CD8-positive, alpha-beta T cell (primary cell): ENCODE measurements at regions of chr18 and their contacts with region 1.

Region 1: GRCh38 chr18:24014062-24014985 is at the start of gene TTC39C:
- DNase-seq: peak; percentile 55 to 90 (median 83)
- ATAC-seq: peak; percentile 68
- H3K4me3 ChIP-seq: peak within 1 kb of the TSS; percentile 72 to 90
- H3K4me3 Mint-ChIP-seq: peak within 1 kb of the TSS; percentile 92
- H3K27ac ChIP-seq: peak within 1 kb of the TSS; percentile 58 to 80
- H3K27ac Mint-ChIP-seq: peak within 1 kb of the TSS; percentile 90
- H3K4me1 ChIP-seq: peaks cover 78% of the 10 kb centered on the region
- H3K4me1 Mint-ChIP-seq: peaks cover 78% of the 10 kb centered on the region
- H3K27me3 ChIP-seq: no peaks in the 10 kb centered on the region
- H3K27me3 Mint-ChIP-seq: no peaks in the 10 kb centered on the region
- CTCF ChIP-seq: no peak
- total RNA-seq, gene TTC39C: 84.7 to 85.7 TPM

Region 2: GRCh38 chr18:23586249-23587196 is 427.8 kb before region 1 on chr18 and contains the start of gene NPC1:
- CTCF ChIA-PET with region 1: no interaction called
- POLR2A ChIA-PET with region 1: no interaction called
- intact Hi-C with region 1: loop called in 1 of 2 experiments (anchors 10 kb)
- DNase-seq: peak; percentile 84 to 96 (median 91)
- ATAC-seq: peak; percentile 88
- H3K4me3 ChIP-seq: peak within 1 kb of the TSS; percentile 99 to 100
- H3K4me3 Mint-ChIP-seq: peak within 1 kb of the TSS; percentile 95
- H3K27ac ChIP-seq: peak within 1 kb of the TSS; percentile 99 to 100
- H3K27ac Mint-ChIP-seq: peak within 1 kb of the TSS; percentile 97
- H3K4me1 ChIP-seq: peaks cover 24% of the 10 kb centered on the region
- H3K4me1 Mint-ChIP-seq: peaks cover 41% of the 10 kb centered on the region
- H3K27me3 ChIP-seq: no peaks in the 10 kb centered on the region
- H3K27me3 Mint-ChIP-seq: no peaks in the 10 kb centered on the region
- CTCF ChIP-seq: peak; percentile 99
- total RNA-seq, gene NPC1: 37.3 to 38.9 TPM

Region 3: GRCh38 chr18:23828426-23828825 is 185.9 kb before region 1 on chr18:
- CTCF ChIA-PET with region 1: no interaction called
- POLR2A ChIA-PET with region 1: no interaction called
- intact Hi-C with region 1: loop called in 1 of 2 experiments (anchors 5 kb)
- DNase-seq: peak in 8 of 9 experiments; percentile 25 to 91 (median 52)
- ATAC-seq: peak; percentile 98
- H3K4me3 ChIP-seq: no peak overlapping the region
- H3K4me3 Mint-ChIP-seq: no peak overlapping the region
- H3K27ac ChIP-seq: peak overlapping the region; percentile 32 to 73
- H3K27ac Mint-ChIP-seq: peak overlapping the region; percentile 56
- H3K4me1 ChIP-seq: peaks cover 12% of the 10 kb centered on the region
- H3K4me1 Mint-ChIP-seq: peaks cover 17% of the 10 kb centered on the region
- H3K27me3 ChIP-seq: no peaks in the 10 kb centered on the region
- H3K27me3 Mint-ChIP-seq: peaks cover under 1% of the 10 kb centered on the region
- CTCF ChIP-seq: no peak

Region 4: DNA sequence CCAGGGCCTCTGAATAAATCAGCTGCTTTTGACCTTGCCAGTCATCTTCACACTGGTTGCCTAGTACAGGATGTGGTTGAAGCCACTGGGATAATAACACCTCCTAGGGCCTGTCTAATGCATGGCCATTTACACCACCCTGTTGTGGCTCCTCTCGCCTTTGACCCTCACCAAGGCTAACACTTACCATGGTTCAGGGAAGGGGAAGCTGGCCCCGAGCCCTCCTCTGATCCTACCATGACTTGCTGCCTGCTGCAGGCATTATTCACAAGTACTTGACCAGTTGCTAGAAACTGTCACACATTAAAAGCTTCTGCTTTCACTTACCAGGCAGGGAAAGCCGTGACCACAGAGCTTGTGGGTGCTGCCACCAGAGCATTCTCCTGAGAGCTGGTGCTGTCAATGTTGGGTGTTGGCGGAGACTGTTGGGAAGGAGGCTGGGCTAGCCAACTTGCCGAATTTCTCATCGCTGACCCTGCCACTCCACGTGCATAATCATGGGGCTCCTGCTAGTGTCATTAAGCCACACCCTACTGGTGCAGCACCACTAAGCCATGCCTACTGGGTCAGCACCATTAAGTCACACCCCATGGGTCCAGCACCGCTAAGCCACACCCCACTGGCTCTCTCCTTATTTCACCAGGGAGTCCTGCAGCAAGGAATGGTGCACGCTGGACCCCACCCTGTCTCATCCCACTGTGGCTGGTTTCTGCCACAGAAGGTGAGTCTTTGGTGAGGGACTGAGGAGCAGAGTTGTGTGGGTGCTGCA is 46.8 kb before region 1 on chr18:
- CTCF ChIA-PET with region 1: interaction called, 8 read pairs
- POLR2A ChIA-PET with region 1: interaction called, 6 read pairs
- intact Hi-C with region 1: loop called (anchors 1 to 2 kb)
- DNase-seq: peak in 7 of 9 experiments; percentile 16 to 73 (median 44)
- ATAC-seq: peak; percentile 7
- H3K4me3 ChIP-seq: no peak overlapping the region
- H3K4me3 Mint-ChIP-seq: peak overlapping the region; percentile 43
- H3K27ac ChIP-seq: peak overlapping the region in 1 of 2 experiments; percentile 6
- H3K27ac Mint-ChIP-seq: peak overlapping the region; percentile 73
- H3K4me1 ChIP-seq: peaks cover 69% of the 10 kb centered on the region
- H3K4me1 Mint-ChIP-seq: peaks cover 77% of the 10 kb centered on the region
- H3K27me3 ChIP-seq: no peaks in the 10 kb centered on the region
- H3K27me3 Mint-ChIP-seq: no peaks in the 10 kb centered on the region
- CTCF ChIP-seq: no peak

Region 5: DNA sequence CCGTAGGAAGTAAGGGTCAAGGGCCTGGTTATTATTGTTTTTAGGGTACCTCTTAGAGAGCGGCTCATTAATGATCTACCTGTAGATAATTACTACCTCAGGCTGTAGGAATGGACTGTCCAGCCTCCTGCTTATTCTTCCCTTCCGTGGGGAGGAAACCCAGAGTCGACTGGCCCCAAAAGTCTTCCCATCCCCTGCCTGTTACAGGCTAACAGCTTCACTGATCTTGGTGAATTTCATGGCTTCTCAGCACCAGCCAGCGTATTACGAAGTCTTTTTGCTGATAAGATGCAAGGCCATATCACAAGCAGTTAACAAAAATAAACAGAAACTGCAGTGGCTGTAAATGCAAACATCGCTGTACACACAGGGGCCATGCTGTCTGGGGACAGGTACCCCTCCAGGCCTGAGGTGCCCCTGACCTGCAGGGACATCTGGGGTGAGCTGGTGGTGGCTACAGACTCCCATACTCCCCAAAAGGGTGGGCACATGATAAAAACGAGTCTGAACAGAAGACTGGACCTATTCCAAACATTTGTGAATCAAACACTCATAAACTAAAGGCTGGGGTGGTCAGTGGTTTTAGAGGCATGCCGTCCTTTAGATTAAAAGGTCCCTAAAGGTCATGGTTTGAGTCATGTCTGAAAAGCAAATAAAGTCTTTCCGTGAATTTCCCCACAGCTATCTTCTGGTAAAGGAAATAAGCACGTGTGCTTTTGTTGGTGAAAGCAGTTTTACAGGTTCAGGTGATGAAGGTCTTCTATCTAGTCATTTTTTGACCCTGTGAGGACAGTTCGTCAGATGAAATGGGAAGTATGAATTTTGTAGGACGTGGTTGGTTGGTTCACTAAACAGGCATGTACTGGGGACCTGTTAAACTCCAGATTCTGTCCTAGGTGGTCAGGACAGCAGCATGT is 37.0 kb after region 1 on chr18:
- CTCF ChIA-PET with region 1: no interaction called
- POLR2A ChIA-PET with region 1: no interaction called
- intact Hi-C with region 1: loop called in 1 of 2 experiments (anchors 2 kb)
- DNase-seq: no peak
- ATAC-seq: no peak
- H3K4me3 ChIP-seq: no peak overlapping the region
- H3K4me3 Mint-ChIP-seq: peak overlapping the region; percentile 8
- H3K27ac ChIP-seq: no peak overlapping the region
- H3K27ac Mint-ChIP-seq: peak overlapping the region; percentile 67
- H3K4me1 ChIP-seq: peaks cover 63% of the 10 kb centered on the region
- H3K4me1 Mint-ChIP-seq: peaks cover 84% of the 10 kb centered on the region
- H3K27me3 ChIP-seq: no peaks in the 10 kb centered on the region
- H3K27me3 Mint-ChIP-seq: no peaks in the 10 kb centered on the region
- CTCF ChIP-seq: no peak

Region 6: DNA sequence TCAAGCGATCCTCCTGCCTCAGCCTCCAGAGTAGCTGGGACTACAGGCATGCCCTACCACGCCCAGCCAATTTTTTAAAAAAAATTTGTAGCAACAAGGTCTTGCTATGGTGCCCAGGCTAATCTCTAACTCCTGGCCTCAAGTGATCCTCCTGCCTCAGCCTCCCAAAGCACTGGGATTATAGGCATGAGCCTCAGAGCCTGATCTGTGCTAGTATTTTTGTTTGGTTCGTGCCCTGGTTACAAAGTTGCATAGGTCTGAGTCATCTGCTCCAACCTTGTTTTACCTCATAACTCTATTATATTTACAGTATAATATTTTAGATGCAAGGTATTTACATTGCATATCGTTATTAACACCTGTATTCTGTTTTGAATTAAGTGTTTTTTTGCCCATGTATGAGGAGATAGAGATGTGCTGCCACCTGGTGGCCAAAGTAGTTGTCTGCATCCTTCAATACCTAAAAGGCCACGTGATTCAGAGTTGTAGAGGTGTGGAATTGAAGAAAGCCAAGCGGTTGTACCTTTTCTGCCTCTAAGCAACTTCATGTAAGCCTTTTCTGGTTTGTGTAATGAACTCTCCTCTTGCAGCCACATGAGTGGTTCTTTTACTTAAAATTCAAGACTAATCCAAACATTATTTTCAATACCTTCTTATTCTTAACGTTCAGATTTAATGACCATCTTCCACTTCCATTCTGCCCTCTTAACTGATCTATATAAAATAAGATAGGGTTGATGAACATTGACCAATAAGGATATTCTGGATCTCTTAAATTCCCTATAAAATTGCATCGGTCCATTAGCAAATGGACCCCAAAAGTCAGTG is 104.6 kb after region 1 on chr18:
- CTCF ChIA-PET with region 1: interaction called, 6 read pairs
- POLR2A ChIA-PET with region 1: interaction called, 3 read pairs
- intact Hi-C with region 1: loop called (anchors 2 to 5 kb)
- DNase-seq: peak; percentile 55 to 89 (median 79)
- ATAC-seq: peak; percentile 90
- H3K4me3 ChIP-seq: no peak overlapping the region
- H3K4me3 Mint-ChIP-seq: no peak overlapping the region
- H3K27ac ChIP-seq: no peak overlapping the region
- H3K27ac Mint-ChIP-seq: no peak overlapping the region
- H3K4me1 ChIP-seq: peaks cover 10% of the 10 kb centered on the region
- H3K4me1 Mint-ChIP-seq: peaks cover 23% of the 10 kb centered on the region
- H3K27me3 ChIP-seq: no peaks in the 10 kb centered on the region
- H3K27me3 Mint-ChIP-seq: no peaks in the 10 kb centered on the region
- CTCF ChIP-seq: peak; percentile 77